A673 (cell line): ENCODE measurements at regions of chr7 and their contacts with region 1.

Region 1: DNA sequence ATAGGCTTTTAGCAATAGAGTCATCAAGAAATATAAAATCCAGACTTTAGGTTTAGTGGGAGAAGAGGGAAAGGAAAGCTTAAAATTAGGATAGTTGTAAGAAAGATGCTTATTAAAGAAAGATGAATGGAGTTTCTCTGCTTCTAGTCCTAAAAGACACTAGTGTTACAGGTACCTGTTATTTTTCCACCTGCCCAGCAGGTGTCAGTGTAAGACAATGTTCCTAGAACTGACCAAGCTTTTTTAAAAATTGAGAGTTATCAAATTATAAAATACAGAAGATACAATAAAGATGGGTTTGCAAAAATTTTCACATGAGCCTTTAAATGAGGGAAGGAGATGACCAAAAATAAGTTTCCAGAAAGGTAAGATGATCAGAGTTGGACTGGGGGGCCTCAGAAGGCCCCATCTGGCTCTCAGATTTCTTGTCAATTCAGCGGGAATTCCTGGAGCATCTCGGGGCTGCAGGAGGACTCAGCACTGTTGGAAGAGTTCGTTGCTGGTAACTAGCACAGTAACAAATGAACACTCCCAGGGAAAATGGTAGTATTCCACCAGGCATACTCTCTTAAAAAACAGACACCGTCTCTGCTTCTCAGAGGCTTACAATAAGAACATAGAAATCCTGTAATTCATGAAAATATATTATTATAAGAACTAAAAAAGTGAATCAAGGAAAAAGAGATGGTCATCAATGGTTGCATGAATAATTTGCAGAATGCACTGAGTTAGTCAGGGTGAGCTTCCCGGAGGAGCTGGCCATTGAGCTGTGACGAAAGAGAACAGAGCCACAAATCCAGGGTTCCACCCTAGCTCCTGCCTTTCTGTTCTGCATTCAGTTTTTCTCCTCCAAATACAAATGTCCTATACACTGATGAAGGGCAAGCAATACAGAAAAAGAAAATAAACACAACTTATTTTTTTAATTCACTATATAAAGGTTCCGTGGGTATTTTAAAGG is 71.8 kb upstream of the PIK3CG start:
- DNase-seq: peak; percentile 17
- H3K4me3 ChIP-seq: no peak overlapping the region
- H3K27ac ChIP-seq: no peak overlapping the region
- H3K4me1 ChIP-seq: no peaks in the 10 kb centered on the region
- H3K27me3 ChIP-seq: no peaks in the 10 kb centered on the region
- CTCF ChIP-seq: peak; percentile 75

Region 2: GRCh38 chr7:107150375-107151073 is 357.2 kb after region 1 on chr7:
- CTCF ChIA-PET with region 1: interaction called, 4 read pairs
- POLR2A ChIA-PET with region 1: no interaction called
- intact Hi-C with region 1: loop called (anchors 1 kb)
- DNase-seq: peak; percentile 67
- H3K4me3 ChIP-seq: no peak overlapping the region
- H3K27ac ChIP-seq: no peak overlapping the region
- H3K4me1 ChIP-seq: no peaks in the 10 kb centered on the region
- H3K27me3 ChIP-seq: no peaks in the 10 kb centered on the region
- CTCF ChIP-seq: peak; percentile 73